Activated naive CD4-positive, alpha-beta T cell treated with anti-CD3 and anti-CD28 coated beads for 36 hours (primary cell): ENCODE measurements at regions of chr3 and their contacts with region 1.

Region 1: DNA sequence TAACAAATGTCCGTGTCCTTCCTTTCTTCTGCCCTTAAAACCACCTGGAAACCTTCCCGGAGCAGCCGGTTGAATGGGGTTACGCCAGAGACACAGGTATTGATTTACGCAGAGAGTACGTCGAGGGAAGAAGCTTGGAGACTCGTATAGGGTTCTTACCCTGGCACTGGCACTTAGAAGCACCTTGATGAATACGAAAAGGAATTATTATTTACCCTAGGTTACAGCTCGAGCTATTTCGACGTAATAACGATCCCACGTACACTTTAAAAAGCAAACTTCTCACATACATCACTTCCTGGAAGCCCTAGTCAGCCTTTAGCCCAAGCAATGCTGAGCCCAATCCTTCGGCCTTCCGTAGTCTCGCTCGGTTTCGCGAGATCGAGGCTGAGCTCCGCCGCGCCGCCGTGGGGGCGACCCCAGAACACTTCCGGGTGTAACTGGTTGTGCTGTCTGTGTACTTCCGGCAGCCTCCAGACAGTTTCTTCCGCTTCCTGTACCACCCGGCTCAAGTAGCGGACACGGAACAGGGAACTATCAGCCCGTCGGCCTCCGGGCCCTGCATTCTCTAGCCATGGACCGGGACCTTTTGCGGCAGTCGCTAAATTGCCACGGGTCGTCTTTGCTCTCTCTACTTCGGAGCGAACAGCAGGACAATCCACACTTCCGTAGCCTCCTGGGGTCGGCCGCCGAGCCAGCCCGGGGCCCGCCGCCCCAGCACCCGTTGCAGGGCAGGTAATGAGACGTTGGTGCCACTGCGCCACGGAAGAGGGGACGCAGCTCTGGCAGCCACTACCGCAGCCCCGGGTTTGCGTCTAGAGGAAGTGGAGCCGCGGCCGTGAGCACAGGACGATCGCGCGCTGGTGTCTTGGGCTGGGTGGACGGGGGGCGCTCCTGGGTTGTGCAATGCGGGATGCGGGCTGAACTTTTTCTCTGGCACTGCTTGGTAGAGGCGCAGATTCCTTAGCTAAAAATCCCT is at the start of gene TTC14:
- DNase-seq: peak; percentile 96
- H3K4me3 Mint-ChIP-seq: peak within 1 kb of the TSS; percentile 94
- H3K27ac Mint-ChIP-seq: peak within 1 kb of the TSS; percentile 91
- H3K4me1 Mint-ChIP-seq: peaks cover 15% of the 10 kb centered on the region
- H3K27me3 Mint-ChIP-seq: peaks cover 11% of the 10 kb centered on the region
- total RNA-seq, gene TTC14: 51.7 to 52.4 TPM

Region 2: GRCh38 chr3:179464323-179465089 is 1137.5 kb before region 1 on chr3:
- CTCF ChIA-PET with region 1: no interaction called
- intact Hi-C with region 1: loop called (anchors 5 kb)
- DNase-seq: peak; percentile 47
- H3K4me3 Mint-ChIP-seq: peak overlapping the region; percentile 47
- H3K27ac Mint-ChIP-seq: no peak overlapping the region
- H3K4me1 Mint-ChIP-seq: peaks cover 8% of the 10 kb centered on the region
- H3K27me3 Mint-ChIP-seq: no peaks in the 10 kb centered on the region

Region 3: GRCh38 chr3:179653096-179653797 is 948.7 kb before region 1 on chr3:
- CTCF ChIA-PET with region 1: no interaction called
- intact Hi-C with region 1: loop called (anchors 1 kb)
- DNase-seq: peak; percentile 72
- H3K4me3 Mint-ChIP-seq: peak overlapping the region; percentile 85
- H3K27ac Mint-ChIP-seq: peak overlapping the region; percentile 67
- H3K4me1 Mint-ChIP-seq: peaks cover 17% of the 10 kb centered on the region
- H3K27me3 Mint-ChIP-seq: peaks cover 8% of the 10 kb centered on the region

Region 4: DNA sequence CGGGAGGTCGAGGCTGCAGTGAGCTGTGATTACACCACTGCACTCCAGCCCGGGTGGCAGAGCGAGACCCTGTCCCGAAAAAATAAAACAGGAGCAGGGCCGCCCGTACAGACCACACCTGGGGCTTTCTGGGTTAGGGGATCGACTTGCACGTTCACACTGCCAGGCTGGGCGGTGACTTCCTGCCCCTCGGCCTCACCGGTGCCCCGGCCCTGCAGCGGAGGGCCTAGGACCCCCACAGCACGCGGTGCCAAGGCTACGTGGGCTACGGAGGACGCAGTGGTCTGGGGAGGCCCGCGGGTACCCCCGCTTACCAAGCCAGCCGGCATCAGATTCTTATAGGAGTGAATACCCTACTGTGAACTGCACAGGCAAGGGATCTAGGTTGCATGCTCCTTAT is 11.6 kb before region 1 on chr3:
- CTCF ChIA-PET with region 1: no interaction called
- intact Hi-C with region 1: no loop called
- DNase-seq: no peak
- H3K4me3 Mint-ChIP-seq: no peak overlapping the region
- H3K27ac Mint-ChIP-seq: no peak overlapping the region
- H3K4me1 Mint-ChIP-seq: no peaks in the 10 kb centered on the region
- H3K27me3 Mint-ChIP-seq: peaks cover 37% of the 10 kb centered on the region

Region 5: GRCh38 chr3:180626844-180627243 is 24.9 kb after region 1 on chr3:
- CTCF ChIA-PET with region 1: no interaction called
- intact Hi-C with region 1: loop called (anchors 1 kb)
- DNase-seq: peak; percentile 20
- H3K4me3 Mint-ChIP-seq: no peak overlapping the region
- H3K27ac Mint-ChIP-seq: peak overlapping the region; percentile 18
- H3K4me1 Mint-ChIP-seq: peaks cover 41% of the 10 kb centered on the region
- H3K27me3 Mint-ChIP-seq: no peaks in the 10 kb centered on the region

Region 6: GRCh38 chr3:180679178-180680096 is 77.5 kb after region 1 on chr3 and contains the start of gene CCDC39:
- CTCF ChIA-PET with region 1: interaction called, 4 read pairs
- intact Hi-C with region 1: loop called (anchors 1 kb)
- DNase-seq: peak; percentile 74
- H3K4me3 Mint-ChIP-seq: peak within 1 kb of the TSS; percentile 83
- H3K27ac Mint-ChIP-seq: no peak within 1 kb of the TSS
- H3K4me1 Mint-ChIP-seq: peaks cover 11% of the 10 kb centered on the region
- H3K27me3 Mint-ChIP-seq: peaks cover 40% of the 10 kb centered on the region
- total RNA-seq, gene CCDC39: not detected